ENCODE measurements at regions of chr4 and their contacts with region 1.

Region 1: GRCh38 chr4:139153420-139154133 is 23.4 kb downstream of the ELF2 start:
- DNase-seq: no peak
- H3K4me3 ChIP-seq: no peak overlapping the region
- H3K27ac ChIP-seq: peak overlapping the region in 2 of 3 donors; percentile 27 to 46
- H3K4me1 ChIP-seq: peaks cover 21 to 23% of the 10 kb centered on the region in 2 donors
- H3K27me3 ChIP-seq: no peaks in the 10 kb centered on the region
- CTCF ChIP-seq: no peak
- POLR2A ChIP-seq: no peak

Region 2: GRCh38 chr4:139108567-139109128 is 44.9 kb before region 1 on chr4:
- intact Hi-C with region 1: loop called (anchors 10 kb)
- DNase-seq: no peak
- H3K4me3 ChIP-seq: no peak overlapping the region
- H3K27ac ChIP-seq: no peak overlapping the region
- H3K4me1 ChIP-seq: no peaks in the 10 kb centered on the region
- H3K27me3 ChIP-seq: no peaks in the 10 kb centered on the region
- CTCF ChIP-seq: no peak
- POLR2A ChIP-seq: no peak